ENCODE measurements at regions of chr5 and their contacts with region 1.

Region 1: GRCh38 chr5:177327539-177328522 is 16.1 kb upstream of the MXD3 start:
- DNase-seq: peak in 1 of 2 donors; percentile 66
- H3K4me3 ChIP-seq: no peak overlapping the region
- H3K27ac ChIP-seq: peak overlapping the region in 2 of 5 donors; percentile 34 to 45
- H3K4me1 ChIP-seq: peaks cover 0 to 12% (median 6%) of the 10 kb centered on the region in 4 donors
- H3K27me3 ChIP-seq: no peaks in the 10 kb centered on the region
- CTCF ChIP-seq: no peak
- EP300 ChIP-seq: no peak
- POLR2A ChIP-seq: no peak

Region 2: DNA sequence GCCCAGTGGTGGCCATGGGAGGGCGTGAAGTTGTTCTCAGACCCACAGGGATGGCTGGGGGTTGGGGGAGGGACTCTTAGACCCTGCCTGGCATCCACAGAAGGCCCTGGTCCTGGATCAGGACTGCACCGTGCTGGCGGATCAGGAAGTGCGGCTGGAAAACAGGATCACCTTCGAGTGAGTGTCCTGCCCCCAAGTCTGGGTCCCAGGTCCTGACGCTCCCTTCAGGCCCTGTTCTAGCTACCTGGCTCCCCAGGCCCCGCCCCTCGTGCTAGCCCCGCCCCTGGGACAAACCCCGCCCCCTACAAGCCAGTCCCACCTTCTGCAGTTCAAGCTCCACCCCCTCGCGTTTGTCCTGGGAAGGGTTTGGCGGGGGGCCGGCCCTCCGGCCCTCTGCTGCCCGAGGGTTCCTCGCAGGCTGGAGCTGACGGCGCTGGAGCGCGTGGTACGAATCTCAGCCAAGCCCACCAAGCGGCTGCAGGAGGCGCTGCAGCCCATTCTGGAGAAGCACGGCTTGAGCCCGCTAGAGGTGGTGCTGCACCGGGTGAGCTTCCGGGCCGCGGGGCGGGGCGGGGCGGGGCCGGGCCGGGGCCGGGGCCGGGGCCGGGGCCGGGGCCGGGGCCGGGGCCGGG is 42.8 kb after region 1 on chr5:
- intact Hi-C with region 1: loop called (anchors 10 kb)
- DNase-seq: peak; percentile 89 to 92
- H3K4me3 ChIP-seq: peak overlapping the region; percentile 32 to 55 (median 44)
- H3K27ac ChIP-seq: peak overlapping the region; percentile 50 to 74 (median 68)
- H3K4me1 ChIP-seq: peaks cover 45 to 71% (median 60%) of the 10 kb centered on the region in 4 donors
- H3K27me3 ChIP-seq: no peaks in the 10 kb centered on the region
- CTCF ChIP-seq: peak in 4 of 7 experiments; percentile 35 to 58 (median 44)
- EP300 ChIP-seq: no peak
- POLR2A ChIP-seq: no peak